ENCODE measurements at regions of chr5 and their contacts with region 1.

Region 1: GRCh38 chr5:157917899-157918809 is 59.2 kb upstream of the CLINT1 start:
- DNase-seq: peak; percentile 70
- ATAC-seq: peak; percentile 48 to 54
- H3K4me3 ChIP-seq: peak overlapping the region; percentile 29
- H3K27ac ChIP-seq: peak overlapping the region; percentile 76
- H3K4me1 ChIP-seq: peaks cover 62% of the 10 kb centered on the region
- H3K27me3 ChIP-seq: no peaks in the 10 kb centered on the region
- CTCF ChIP-seq: peak; percentile 45

Region 2: DNA sequence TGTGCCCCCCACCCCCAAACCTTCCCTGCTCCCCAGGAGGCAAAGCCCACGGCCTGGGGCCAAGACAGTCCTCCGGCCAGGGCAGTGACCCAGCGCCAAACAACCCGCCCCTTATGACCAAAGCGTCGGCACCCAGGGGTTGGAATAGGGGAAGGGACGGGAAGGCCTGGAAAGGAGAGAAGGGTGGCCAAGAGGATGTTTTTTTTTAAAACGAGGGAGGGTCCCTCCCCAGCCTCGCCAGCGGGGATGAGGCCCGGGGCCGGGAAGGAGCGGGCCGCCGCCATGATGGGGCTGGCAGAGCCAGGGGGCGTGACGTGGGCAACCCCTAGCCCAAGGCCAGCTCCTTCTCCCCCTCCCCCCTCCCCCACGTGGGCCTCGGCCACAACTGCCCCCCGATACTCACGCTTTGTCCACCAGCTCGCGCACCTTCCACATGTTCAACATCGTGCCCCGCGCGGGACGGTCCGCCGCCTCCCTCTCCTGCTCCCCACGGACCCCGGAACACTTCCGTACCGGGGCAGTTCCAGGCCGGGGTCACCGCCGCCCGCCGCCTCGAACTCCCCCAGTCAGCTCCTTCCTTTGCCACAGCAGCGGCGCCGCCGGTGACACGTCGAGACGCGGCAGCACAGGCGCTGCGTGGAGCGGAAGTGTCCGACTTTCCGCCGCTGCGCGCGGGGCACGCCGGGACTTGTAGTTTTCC is 59.5 kb before region 1 on chr5 and contains the start of gene CLINT1:
- intact Hi-C with region 1: loop called (anchors 10 kb)
- DNase-seq: peak; percentile 96
- ATAC-seq: peak; percentile 96 to 98
- H3K4me3 ChIP-seq: peak within 1 kb of the TSS; percentile 84
- H3K27ac ChIP-seq: peak within 1 kb of the TSS; percentile 92
- H3K4me1 ChIP-seq: peaks cover 44% of the 10 kb centered on the region
- H3K27me3 ChIP-seq: no peaks in the 10 kb centered on the region
- CTCF ChIP-seq: no peak
- total RNA-seq, gene CLINT1: 79.2 TPM

Measured in lower lobe of right lung (tissue), 2 donors.